ENCODE measurements at regions of chr15 and their contacts with region 1.

Region 1: DNA sequence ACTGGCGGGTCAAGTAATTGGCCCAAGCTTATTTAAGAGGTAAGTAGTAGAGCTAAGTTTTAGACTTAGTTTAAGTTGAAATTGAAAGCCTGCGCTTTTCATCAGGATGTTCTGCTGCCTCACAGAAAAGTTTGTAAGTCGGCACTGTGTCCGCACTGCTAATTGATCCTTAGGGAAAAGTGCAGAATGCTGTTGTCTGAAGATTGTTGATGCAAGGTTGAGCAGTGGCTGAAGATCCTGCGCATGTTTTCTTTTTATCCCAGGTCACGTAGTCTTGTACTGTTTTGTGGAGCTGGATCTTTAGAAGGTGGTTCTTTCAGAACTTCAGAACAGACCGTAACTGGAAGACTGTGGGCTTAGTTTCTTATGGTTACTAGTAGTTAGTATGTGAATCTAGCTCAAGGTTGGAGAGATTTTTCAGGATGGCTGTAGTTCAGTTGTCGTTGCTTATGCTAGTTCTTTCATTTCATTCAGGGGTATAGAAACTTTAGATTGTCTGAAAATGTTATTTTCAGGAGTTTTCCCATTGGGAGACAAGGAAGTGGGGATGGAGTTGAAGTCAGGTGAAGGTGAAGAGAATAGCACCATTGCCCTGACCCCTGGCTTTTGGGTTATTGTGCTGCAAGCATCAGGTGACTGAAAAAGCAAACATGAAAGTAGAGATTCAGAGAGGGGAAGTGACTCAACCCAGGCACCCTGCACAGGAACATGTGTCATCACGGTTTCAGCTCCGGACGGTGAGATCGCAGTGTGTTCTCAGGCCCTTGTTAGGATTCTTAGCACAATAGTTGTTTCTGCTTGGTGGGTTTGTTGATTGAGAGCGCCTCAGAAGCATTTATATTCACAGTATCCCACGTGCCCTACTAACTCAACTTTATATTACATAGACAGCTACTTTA is 32.8 kb downstream of the AKAP13 start:
- DNase-seq: peak; percentile 77
- H3K4me3 ChIP-seq: no peak overlapping the region
- H3K27ac ChIP-seq: peak overlapping the region; percentile 45 to 61 (median 54)
- H3K4me1 ChIP-seq: peaks cover 4 to 30% (median 15%) of the 10 kb centered on the region in 4 donors
- H3K27me3 ChIP-seq: no peaks in the 10 kb centered on the region
- CTCF ChIP-seq: no peak
- EP300 ChIP-seq: no peak
- POLR2A ChIP-seq: no peak

Region 2: DNA sequence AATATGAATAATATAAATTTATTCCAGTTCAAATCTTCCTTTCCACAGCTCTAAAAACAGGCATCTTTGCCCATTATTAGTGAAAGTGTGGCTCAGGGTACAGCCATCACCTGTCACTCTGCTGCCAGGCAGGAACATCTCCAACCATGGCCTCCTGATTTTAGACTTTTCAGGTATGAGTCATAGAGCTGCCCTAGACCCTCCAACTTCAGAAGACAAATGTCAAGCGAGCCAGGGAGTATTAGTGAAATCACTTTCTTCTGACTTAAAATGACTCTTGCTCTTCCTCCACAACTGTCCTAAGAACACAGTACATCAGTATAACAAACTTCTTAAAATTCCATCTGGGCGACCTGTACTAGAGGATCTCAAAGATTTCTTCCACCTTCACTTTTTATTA is 110.9 kb before region 1 on chr15:
- in situ Hi-C with region 1: no loop called
- intact Hi-C with region 1: no loop called
- DNase-seq: no peak
- H3K4me3 ChIP-seq: no peak overlapping the region
- H3K27ac ChIP-seq: no peak overlapping the region
- H3K4me1 ChIP-seq: no peaks in the 10 kb centered on the region
- H3K27me3 ChIP-seq: no peaks in the 10 kb centered on the region
- CTCF ChIP-seq: no peak
- EP300 ChIP-seq: no peak
- POLR2A ChIP-seq: no peak

Region 3: GRCh38 chr15:85330901-85331588 is 82.2 kb before region 1 on chr15:
- in situ Hi-C with region 1: loop called in 1 of 4 experiments (anchors 10 kb)
- intact Hi-C with region 1: no loop called
- DNase-seq: peak; percentile 95
- H3K4me3 ChIP-seq: no peak overlapping the region
- H3K27ac ChIP-seq: peak overlapping the region; percentile 83 to 88 (median 86)
- H3K4me1 ChIP-seq: peaks cover 10 to 32% (median 22%) of the 10 kb centered on the region in 4 donors
- H3K27me3 ChIP-seq: no peaks in the 10 kb centered on the region
- CTCF ChIP-seq: peak; percentile 75 to 90 (median 82)
- EP300 ChIP-seq: peak; percentile 93
- POLR2A ChIP-seq: peak; percentile 16